ENCODE measurements at regions of chr14 and their contacts with region 1.

Region 1: GRCh38 chr14:86153480-86153879 is 623.5 kb downstream of the FLRT2 start:
- DNase-seq: no peak
- ATAC-seq: no peak
- H3K4me3 ChIP-seq: no peak overlapping the region
- H3K27ac ChIP-seq: no peak overlapping the region
- H3K4me1 ChIP-seq: no peaks in the 10 kb centered on the region
- H3K27me3 ChIP-seq: no peaks in the 10 kb centered on the region
- CTCF ChIP-seq: no peak
- EP300 ChIP-seq: no peak
- POLR2A ChIP-seq: no peak
- RAD21 ChIP-seq: no peak

Region 2: DNA sequence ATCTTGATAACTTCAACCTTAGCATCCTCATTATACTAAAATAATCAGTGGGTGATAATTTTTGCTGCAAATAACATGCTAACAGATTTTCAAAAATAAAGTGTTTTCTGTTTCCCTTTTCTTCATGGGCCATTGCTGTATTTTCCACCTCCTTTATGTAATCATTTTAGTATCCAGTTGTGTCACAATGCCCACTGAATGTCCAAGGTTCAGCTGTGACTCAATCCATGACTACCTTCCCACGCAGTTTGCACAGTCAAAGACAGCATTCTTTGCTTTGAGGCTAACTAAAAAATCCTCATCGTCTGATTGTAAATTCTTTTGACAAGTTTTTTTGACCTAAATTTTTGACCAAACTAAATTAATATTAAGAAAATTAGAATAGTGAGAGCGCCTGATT is 149.5 kb before region 1 on chr14:
- CTCF ChIA-PET with region 1: no interaction called
- POLR2A ChIA-PET with region 1: interaction called, 11 read pairs
- RAD21 ChIA-PET with region 1: no interaction called
- SMC1A ChIA-PET with region 1: no interaction called
- in situ Hi-C with region 1: no loop called
- intact Hi-C with region 1: no loop called
- DNase-seq: no peak
- ATAC-seq: peak; percentile 69
- H3K4me3 ChIP-seq: no peak overlapping the region
- H3K27ac ChIP-seq: no peak overlapping the region
- H3K4me1 ChIP-seq: no peaks in the 10 kb centered on the region
- H3K27me3 ChIP-seq: no peaks in the 10 kb centered on the region
- CTCF ChIP-seq: no peak
- EP300 ChIP-seq: peak in 1 of 2 experiments; percentile 55; a peak in 1 of 4 replicates
- POLR2A ChIP-seq: no peak
- RAD21 ChIP-seq: no peak

Region 3: GRCh38 chr14:86414146-86414545 is 260.7 kb after region 1 on chr14:
- CTCF ChIA-PET with region 1: no interaction called
- POLR2A ChIA-PET with region 1: no interaction called
- RAD21 ChIA-PET with region 1: no interaction called
- SMC1A ChIA-PET with region 1: no interaction called
- in situ Hi-C with region 1: no loop called
- intact Hi-C with region 1: no loop called
- DNase-seq: no peak
- ATAC-seq: no peak
- H3K4me3 ChIP-seq: no peak overlapping the region
- H3K27ac ChIP-seq: no peak overlapping the region
- H3K4me1 ChIP-seq: no peaks in the 10 kb centered on the region
- H3K27me3 ChIP-seq: no peaks in the 10 kb centered on the region
- CTCF ChIP-seq: no peak
- EP300 ChIP-seq: no peak
- POLR2A ChIP-seq: no peak
- RAD21 ChIP-seq: no peak